ENCODE measurements at regions of chr7 and their contacts with region 1.

Region 1: DNA sequence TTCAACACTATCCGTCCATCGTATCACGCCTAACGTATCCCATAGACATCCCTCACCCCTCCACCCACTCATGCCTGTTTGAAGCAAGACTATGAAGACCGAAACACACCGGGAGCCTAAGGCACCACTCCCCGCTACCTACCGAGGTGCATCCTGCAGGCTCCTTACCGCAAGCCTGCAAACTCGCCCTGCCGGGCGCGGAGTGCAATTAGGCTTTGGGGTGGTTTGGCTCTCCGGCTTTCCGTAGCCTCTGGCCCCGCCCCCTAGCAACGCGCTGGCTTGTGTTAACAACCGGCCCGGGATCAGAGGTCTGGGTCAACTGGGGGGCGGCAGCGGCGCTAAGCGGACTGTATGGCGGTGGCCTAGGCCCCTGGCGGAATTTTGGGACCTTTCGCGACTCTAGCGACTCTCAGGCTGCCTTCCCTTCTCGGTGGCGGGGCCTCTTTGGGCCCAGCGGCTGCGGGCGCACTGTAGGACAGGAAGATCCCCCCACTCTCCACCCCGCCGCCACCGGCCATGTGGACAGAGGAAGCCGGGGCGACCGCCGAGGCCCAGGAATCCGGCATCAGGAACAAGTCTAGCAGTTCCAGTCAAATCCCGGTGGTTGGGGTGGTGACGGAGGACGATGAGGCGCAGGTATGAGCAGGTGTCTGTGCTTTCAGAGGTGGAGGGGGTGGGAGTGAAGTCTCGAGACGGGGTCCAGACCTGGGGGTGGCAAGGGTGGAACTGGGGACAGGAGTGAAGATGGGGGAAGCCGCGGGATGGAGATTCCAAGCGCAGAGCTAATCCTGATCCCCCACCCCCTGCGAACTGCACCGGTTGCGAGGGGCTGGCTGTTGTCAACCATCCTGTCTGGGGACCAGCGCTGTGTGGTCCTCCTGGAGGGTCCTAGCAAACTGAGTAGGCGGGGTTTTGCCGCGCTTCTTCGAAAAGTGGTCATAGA is at the start of gene CFAP69:
- DNase-seq: no peak
- H3K4me3 ChIP-seq: no peak within 1 kb of the TSS
- H3K27ac ChIP-seq: no peak within 1 kb of the TSS
- H3K4me1 ChIP-seq: no peaks in the 10 kb centered on the region
- CTCF ChIP-seq: no peak
- total RNA-seq, gene CFAP69: not detected in 2 replicates

Region 2: GRCh38 chr7:90412458-90413184 is 167.4 kb after region 1 on chr7:
- CTCF ChIA-PET with region 1: no interaction called
- POLR2A ChIA-PET with region 1: interaction called, 3 read pairs
- intact Hi-C with region 1: loop called (anchors 10 kb)
- DNase-seq: peak; percentile 10
- H3K4me3 ChIP-seq: no peak overlapping the region
- H3K27ac ChIP-seq: no peak overlapping the region
- H3K4me1 ChIP-seq: no peaks in the 10 kb centered on the region
- CTCF ChIP-seq: peak; percentile 66